PC-9 (cell line): ENCODE measurements at regions of chr17 and their contacts with region 1.

Region 1: DNA sequence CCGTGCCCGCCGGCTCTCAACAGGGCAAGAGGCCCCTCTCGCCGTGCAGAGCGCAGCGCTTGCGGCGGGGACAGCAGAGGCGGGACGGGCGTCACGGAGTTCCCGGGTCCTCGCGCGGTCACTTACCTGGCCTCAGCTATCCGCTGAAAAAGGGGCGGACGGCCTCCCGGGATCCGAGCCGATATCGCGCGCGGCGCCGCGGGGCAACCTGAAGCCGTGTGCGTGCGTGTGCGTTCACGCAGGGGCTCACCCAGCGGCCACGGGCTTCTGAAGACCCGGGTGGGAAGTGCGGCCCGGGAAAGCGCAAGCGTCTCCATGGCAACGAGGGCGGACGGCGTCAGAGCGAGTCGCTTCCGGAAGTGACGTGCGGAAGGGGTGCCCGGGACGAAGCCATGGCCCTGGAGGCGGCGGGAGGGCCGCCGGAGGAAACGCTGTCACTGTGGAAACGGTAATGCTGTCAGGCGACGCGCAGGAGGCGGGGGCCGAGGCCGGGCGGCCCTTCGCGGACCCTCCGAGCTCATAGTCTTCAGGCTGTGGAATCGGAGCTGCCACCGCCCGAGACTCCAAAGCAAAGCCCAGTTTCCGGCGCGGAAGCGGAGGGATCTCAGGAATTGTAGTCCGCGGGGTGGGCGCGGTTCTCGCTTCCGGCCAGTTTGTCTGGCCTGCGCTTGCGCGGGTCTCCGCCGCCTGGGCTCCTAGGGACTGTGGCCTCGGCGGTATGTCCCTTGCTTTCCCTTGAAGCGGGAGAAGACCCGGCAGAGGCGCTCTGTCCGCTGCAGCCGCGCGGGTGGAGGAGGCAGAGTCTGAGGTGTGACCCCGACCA is at the start of gene ENDOV:
- DNase-seq: peak; percentile 67 to 88
- H3K4me3 ChIP-seq: peak within 1 kb of the TSS; percentile 67
- H3K27ac ChIP-seq: peak within 1 kb of the TSS; percentile 70
- H3K4me1 ChIP-seq: 0 out of 2 replicates have a peak, but pooled peaks cover 6% of the 10 kb centered on the region
- H3K27me3 ChIP-seq: no peaks in the 10 kb centered on the region
- CTCF ChIP-seq: no peak
- total RNA-seq, gene ENDOV: 50.3 and 84.8 TPM in 2 replicates

Region 2: DNA sequence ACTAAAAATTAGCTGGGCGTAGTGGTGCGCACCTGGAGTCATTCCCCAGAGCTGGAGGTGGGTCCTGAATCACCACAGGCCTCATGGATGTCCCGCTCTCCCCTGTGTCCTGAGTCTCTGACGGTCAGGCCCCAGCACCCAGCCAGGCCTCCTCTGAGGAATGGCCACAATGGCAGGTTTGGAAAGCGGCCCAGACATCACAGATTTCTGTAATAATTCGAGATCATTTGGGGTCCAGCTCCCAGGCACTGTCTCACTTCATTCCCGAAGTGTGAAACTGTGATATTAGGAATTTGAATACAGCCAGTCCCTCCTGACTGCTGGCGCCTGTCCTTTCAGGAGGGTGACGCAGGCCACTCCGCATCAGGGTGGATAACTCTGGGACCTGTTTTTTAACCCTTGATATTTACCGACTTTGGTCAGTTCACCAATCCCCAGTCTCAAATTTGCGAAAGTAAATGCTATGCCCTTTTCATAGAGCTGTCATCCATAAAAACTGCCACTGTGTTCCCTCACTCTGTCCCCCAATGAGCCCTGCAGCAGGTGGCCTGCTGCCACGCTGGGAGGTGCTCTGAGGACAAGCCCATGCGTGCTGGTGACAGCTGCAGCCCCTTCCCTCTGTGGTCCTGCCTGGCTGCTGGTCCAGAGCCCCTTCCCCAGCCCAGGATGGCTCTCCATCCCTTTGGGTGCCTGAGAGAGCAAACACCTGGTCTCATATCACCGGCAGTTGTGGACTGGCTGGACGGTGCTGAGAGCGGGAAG is 101.3 kb after region 1 on chr17:
- CTCF ChIA-PET with region 1: no interaction called
- POLR2A ChIA-PET with region 1: interaction called, 12 read pairs
- intact Hi-C with region 1: no loop called
- DNase-seq: no peak
- H3K4me3 ChIP-seq: no peak overlapping the region
- H3K27ac ChIP-seq: no peak overlapping the region
- H3K4me1 ChIP-seq: no peaks in the 10 kb centered on the region
- H3K27me3 ChIP-seq: no peaks in the 10 kb centered on the region
- CTCF ChIP-seq: no peak